Posterior cingulate gyrus (tissue), 11 donors: ENCODE measurements at regions of chr11 and their contacts with region 1.

Region 1: DNA sequence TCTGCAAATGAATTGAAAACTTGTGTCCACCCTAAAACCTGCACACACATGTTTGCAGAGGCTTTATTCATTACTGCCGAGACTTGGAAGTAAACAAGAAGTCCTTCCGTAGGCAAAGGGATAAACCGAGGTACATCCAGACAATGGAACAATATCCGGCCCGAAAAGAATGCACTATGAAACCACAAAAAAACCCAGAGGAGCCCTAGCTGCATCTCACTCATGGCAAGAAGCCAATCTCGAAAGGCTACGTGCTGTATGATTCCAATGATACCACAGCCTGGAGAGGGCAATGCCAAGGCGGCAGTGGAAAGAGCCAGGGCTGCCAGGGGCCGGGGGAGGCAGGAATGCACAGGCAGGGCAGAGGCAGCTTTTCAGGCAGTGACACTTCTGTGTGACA is 3.2 kb upstream of the MRPL23 start:
- DNase-seq: peak in 4 of 10 donors; percentile 1 to 53 (median 30)

Region 2: DNA sequence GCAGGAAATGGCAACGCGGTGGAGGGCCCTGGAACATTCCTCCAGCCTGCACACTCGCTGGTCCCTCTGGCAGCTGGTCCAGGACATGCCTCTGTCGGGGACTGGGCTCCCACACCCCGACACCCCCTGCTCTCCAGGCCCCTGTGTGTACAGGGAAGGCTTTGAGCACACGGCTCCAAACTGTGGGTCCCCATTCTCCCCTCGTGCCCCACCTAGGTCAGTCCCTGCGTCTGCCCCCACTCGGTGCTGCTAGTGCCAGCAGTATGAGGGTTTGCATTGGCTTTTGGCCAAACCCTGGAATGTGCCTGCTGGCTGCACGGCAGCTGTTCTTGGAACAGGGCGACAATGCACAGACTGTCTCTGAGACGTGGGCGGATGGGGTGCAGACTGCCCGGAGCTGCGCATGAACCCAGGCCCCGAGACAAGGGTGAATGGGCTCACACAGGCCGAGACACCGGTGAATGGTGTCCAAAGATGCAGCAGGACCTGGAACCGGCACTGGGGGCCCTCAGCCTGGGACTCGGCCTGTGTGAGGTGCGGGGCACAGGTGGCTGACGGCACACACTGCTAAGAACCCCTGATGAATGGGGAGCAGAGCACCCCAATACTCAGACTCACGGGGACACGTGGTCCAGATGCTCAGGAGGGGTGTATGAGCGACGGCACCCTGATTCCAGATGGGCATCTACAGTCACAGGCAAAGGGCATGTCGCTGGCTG is 116.7 kb before region 1 on chr11:
- intact Hi-C with region 1: no loop called
- DNase-seq: peak; percentile 52 to 96 (median 71)

Region 3: DNA sequence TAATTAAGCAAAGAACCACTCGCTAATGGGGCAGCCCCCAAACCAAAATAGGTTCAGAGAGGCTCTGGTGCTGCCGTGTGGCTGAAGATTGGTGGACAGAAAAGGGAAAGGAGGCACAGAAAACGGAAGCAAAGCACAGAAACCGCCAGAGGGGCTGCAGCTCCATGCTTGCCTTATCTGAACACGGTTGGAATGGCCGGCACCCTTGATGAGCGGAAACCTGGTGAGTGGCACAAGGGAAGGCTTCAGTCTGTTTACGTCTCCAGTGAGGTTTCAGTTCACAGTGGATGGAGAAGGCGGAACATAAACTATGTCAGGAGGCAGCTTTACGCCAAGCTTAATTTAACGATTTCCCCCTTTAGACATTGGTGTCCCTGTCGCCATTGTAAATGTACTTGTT is 47.1 kb before region 1 on chr11:
- intact Hi-C with region 1: loop called (anchors 5 kb)
- DNase-seq: peak in 2 of 10 donors; percentile 15 to 66

Region 4: GRCh38 chr11:2293984-2294925 is 350.3 kb after region 1 on chr11:
- intact Hi-C with region 1: no loop called
- DNase-seq: peak in 4 of 10 donors; percentile 14 to 77 (median 45)